AG04450 (cell line): ENCODE measurements at regions of chr1 and their contacts with region 1.

Region 1: GRCh38 chr1:31617917-31618660 is 600 bp downstream of the HCRTR1 start:
- DNase-seq: no peak
- H3K4me3 ChIP-seq: peak overlapping the region; percentile 54
- H3K27ac ChIP-seq: no peak overlapping the region
- H3K27me3 ChIP-seq: peaks cover 21% of the 10 kb centered on the region
- CTCF ChIP-seq: peak; percentile 77

Region 2: GRCh38 chr1:31607360-31607759 is 10.7 kb before region 1 on chr1:
- CTCF ChIA-PET with region 1: interaction called, 25 read pairs
- POLR2A ChIA-PET with region 1: interaction called, 6 read pairs
- DNase-seq: no peak
- H3K4me3 ChIP-seq: no peak overlapping the region
- H3K27ac ChIP-seq: no peak overlapping the region
- H3K27me3 ChIP-seq: no peaks in the 10 kb centered on the region
- CTCF ChIP-seq: no peak

Region 3: DNA sequence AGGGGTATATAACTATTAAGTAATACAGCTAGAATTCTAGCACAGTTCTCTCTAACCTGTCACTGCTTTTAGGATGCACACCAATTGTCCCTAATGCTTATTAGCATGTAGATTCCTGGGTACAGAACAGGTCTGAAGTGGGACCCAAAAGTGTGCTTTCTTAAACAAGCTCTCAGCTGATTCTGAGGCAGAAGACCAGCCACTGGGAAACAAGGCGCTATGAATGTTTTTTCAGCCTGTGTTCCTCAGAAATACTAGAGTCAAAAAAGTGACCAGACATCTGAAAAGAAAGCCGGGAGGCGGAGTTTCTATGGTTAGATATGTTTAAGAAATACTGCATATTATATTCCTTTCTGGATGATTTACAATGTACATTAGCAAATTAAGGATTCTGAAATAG is 24.8 kb after region 1 on chr1:
- CTCF ChIA-PET with region 1: interaction called, 12 read pairs
- POLR2A ChIA-PET with region 1: interaction called, 3 read pairs
- DNase-seq: no peak
- H3K4me3 ChIP-seq: no peak overlapping the region
- H3K27ac ChIP-seq: no peak overlapping the region
- H3K27me3 ChIP-seq: no peaks in the 10 kb centered on the region
- CTCF ChIP-seq: no peak

Region 4: GRCh38 chr1:32817159-32817814 is 1199.2 kb after region 1 on chr1 and contains the starts of genes S100PBP and YARS1:
- CTCF ChIA-PET with region 1: interaction called, 10 read pairs
- POLR2A ChIA-PET with region 1: no interaction called
- DNase-seq: peak; percentile 93
- H3K4me3 ChIP-seq: peak within 1 kb of the TSS; percentile 98
- H3K27ac ChIP-seq: peak within 1 kb of the TSS; percentile 97
- H3K27me3 ChIP-seq: no peaks in the 10 kb centered on the region
- CTCF ChIP-seq: no peak
- polyA plus RNA-seq, gene S100PBP: 32.2 and 43.7 TPM in 2 replicates
- polyA plus RNA-seq, gene YARS1: 105 and 107 TPM in 2 replicates